ENCODE measurements at regions of chr12 and their contacts with region 1.

Region 1: DNA sequence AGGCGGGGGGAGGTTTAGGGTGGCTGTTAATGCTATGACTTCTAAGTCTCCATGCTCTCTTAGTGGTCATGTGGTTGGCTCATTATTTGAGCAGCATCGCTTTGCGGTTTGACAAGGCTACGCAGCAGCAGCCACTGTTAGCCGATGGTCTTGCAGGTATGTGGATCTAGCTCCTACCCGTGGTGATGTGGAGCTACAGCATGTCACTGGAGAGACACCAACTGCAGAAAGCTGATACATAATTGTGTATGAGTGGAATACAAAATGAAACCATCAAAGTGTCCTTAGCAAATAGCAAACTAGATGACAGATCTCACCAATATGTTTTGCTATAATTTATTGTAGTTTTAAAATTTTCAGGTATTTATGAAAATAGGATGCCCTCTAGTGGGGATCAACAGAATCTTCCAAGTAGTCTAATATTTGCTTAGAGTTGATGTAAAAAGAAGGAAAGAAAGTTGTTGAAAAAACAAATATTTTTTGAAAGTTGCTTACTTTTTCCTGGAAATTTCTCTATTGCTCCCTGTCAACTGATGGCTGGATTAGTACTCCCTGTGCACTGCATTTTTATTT is 94.9 kb downstream of the NAV3 start:
- DNase-seq: peak; percentile 96
- H3K4me3 ChIP-seq: no peak overlapping the region
- H3K27ac ChIP-seq: no peak overlapping the region
- H3K4me1 ChIP-seq: peaks cover 23% of the 10 kb centered on the region
- H3K27me3 ChIP-seq: no peaks in the 10 kb centered on the region
- CTCF ChIP-seq: peak; percentile 100

Region 2: GRCh38 chr12:77152623-77153193 is 772.9 kb before region 1 on chr12:
- CTCF ChIA-PET with region 1: no interaction called
- POLR2A ChIA-PET with region 1: no interaction called
- intact Hi-C with region 1: loop called (anchors 5 kb)
- DNase-seq: peak; percentile 47
- H3K4me3 ChIP-seq: no peak overlapping the region
- H3K27ac ChIP-seq: no peak overlapping the region
- H3K4me1 ChIP-seq: no peaks in the 10 kb centered on the region
- H3K27me3 ChIP-seq: peaks cover 11% of the 10 kb centered on the region
- CTCF ChIP-seq: peak; percentile 58

Region 3: DNA sequence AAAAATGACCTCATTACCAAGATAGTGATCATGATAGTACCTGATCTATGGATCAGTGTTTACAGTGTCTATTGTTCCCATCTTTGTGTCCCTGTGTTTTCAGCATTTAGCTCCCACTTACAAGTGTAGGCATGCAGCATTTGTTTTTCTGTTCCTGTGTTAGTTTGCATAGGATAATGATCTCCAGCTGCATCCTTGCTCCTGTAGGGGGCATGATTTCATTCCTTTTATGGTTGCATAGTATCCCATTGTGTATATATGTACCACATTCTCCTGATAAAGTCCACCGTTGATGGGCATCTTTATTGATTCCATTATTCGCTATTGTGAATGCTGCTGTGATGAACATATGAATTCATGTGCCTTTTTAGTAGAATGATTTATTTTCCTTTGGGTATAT is 310.3 kb before region 1 on chr12:
- CTCF ChIA-PET with region 1: no interaction called
- POLR2A ChIA-PET with region 1: no interaction called
- intact Hi-C with region 1: loop called (anchors 10 kb)
- DNase-seq: peak; percentile 55
- H3K4me3 ChIP-seq: no peak overlapping the region
- H3K27ac ChIP-seq: no peak overlapping the region
- H3K4me1 ChIP-seq: no peaks in the 10 kb centered on the region
- H3K27me3 ChIP-seq: no peaks in the 10 kb centered on the region
- CTCF ChIP-seq: peak; percentile 64

Region 4: DNA sequence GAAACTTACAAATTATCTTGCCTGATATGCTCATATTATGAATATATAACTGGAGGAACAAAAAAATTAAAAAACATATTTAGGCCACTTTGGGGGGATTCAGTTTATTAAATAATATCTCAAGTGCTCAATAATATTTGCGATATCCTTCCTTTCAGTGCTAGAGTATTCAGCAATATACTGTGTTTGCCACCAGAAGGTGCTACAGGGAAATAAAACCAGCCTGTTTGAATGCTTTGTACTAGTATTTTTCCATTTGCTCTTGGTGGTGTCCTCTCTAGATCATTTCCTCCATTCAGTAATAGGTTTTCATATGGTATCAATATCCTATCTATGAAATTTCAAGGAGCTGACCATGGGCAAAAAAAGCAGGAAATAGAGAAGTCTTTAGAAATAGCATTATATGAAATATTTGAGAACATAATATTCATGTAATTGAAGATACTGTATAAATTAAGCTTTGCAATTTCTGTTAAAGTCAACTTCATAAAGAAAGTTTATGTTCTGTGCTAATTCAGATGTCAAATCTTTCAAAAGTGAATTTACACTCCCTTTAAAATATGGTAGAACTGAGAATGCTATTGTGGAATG is 201.2 kb before region 1 on chr12:
- CTCF ChIA-PET with region 1: interaction called, 12 read pairs
- POLR2A ChIA-PET with region 1: no interaction called
- intact Hi-C with region 1: loop called (anchors 1 kb)
- DNase-seq: peak; percentile 72
- H3K4me3 ChIP-seq: no peak overlapping the region
- H3K27ac ChIP-seq: no peak overlapping the region
- H3K4me1 ChIP-seq: peaks cover 26% of the 10 kb centered on the region
- H3K27me3 ChIP-seq: no peaks in the 10 kb centered on the region
- CTCF ChIP-seq: peak; percentile 83

Region 5: GRCh38 chr12:77833329-77833728 is 92.3 kb before region 1 on chr12:
- CTCF ChIA-PET with region 1: no interaction called
- POLR2A ChIA-PET with region 1: no interaction called
- intact Hi-C with region 1: loop called (anchors 1 kb)
- DNase-seq: peak; percentile 64
- H3K4me3 ChIP-seq: no peak overlapping the region
- H3K27ac ChIP-seq: no peak overlapping the region
- H3K4me1 ChIP-seq: peaks cover 27% of the 10 kb centered on the region
- H3K27me3 ChIP-seq: no peaks in the 10 kb centered on the region
- CTCF ChIP-seq: no peak

Region 6: DNA sequence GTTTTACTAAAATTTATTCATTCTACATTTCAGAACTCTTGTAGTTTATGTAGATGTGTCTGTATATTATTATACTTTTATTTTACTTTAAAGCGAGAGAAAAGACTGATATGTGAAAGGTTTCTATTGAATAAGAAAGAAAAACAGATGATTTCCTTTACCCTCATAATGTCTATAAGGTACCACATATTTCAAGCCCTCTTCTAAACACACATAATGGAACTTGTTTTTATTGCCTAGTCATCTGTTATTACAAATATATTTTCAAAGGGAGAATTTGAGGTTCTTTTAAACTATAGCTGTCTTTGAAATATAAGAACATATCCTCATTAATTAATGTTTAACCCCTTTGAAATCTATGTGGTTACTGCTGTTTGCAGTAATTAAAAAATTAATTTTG is 60.4 kb before region 1 on chr12:
- CTCF ChIA-PET with region 1: no interaction called
- POLR2A ChIA-PET with region 1: no interaction called
- intact Hi-C with region 1: no loop called
- DNase-seq: no peak
- H3K4me3 ChIP-seq: no peak overlapping the region
- H3K27ac ChIP-seq: no peak overlapping the region
- H3K4me1 ChIP-seq: peaks cover 12% of the 10 kb centered on the region
- H3K27me3 ChIP-seq: no peaks in the 10 kb centered on the region
- CTCF ChIP-seq: no peak

Measured in A673 (cell line).